ENCODE measurements at regions of chr12 and their contacts with region 1.

Region 1: GRCh38 chr12:7018350-7019042 is at the start of gene LPCAT3:
- DNase-seq: peak; percentile 98
- ATAC-seq: peak; percentile 98
- H3K4me3 Mint-ChIP-seq: peak within 1 kb of the TSS; percentile 83
- H3K27ac Mint-ChIP-seq: peak within 1 kb of the TSS; percentile 80
- H3K4me1 Mint-ChIP-seq: peaks cover 29% of the 10 kb centered on the region
- H3K27me3 Mint-ChIP-seq: no peaks in the 10 kb centered on the region
- total RNA-seq, gene LPCAT3: 20.8 to 28.0 TPM

Region 2: GRCh38 chr12:6873094-6874014 is 145.1 kb before region 1 on chr12 and contains the start of gene SPSB2:
- CTCF ChIA-PET with region 1: interaction called, 4 read pairs
- POLR2A ChIA-PET with region 1: no interaction called
- intact Hi-C with region 1: loop called in 1 of 2 experiments (anchors 1 kb)
- DNase-seq: peak; percentile 100
- ATAC-seq: peak; percentile 74
- H3K4me3 Mint-ChIP-seq: peak within 1 kb of the TSS; percentile 93
- H3K27ac Mint-ChIP-seq: peak within 1 kb of the TSS; percentile 86
- H3K4me1 Mint-ChIP-seq: peaks cover 50% of the 10 kb centered on the region
- H3K27me3 Mint-ChIP-seq: no peaks in the 10 kb centered on the region
- total RNA-seq, gene SPSB2: 1.7 to 2.2 TPM

Region 3: GRCh38 chr12:6914246-6914946 is 104.1 kb before region 1 on chr12 and contains the start of gene ENO2:
- CTCF ChIA-PET with region 1: no interaction called
- POLR2A ChIA-PET with region 1: no interaction called
- intact Hi-C with region 1: loop called in 1 of 2 experiments (anchors 2 kb)
- DNase-seq: peak; percentile 92
- ATAC-seq: peak; percentile 92
- H3K4me3 Mint-ChIP-seq: peak within 1 kb of the TSS; percentile 98
- H3K27ac Mint-ChIP-seq: peak within 1 kb of the TSS; percentile 80
- H3K4me1 Mint-ChIP-seq: peaks cover 35% of the 10 kb centered on the region
- H3K27me3 Mint-ChIP-seq: no peaks in the 10 kb centered on the region
- total RNA-seq, gene ENO2: 301 to 317 TPM

Region 4: GRCh38 chr12:6944381-6945186 is 73.9 kb before region 1 on chr12:
- CTCF ChIA-PET with region 1: interaction called, 11 read pairs
- POLR2A ChIA-PET with region 1: interaction called, 17 read pairs
- intact Hi-C with region 1: loop called (anchors 1 kb)
- DNase-seq: peak; percentile 94
- ATAC-seq: peak; percentile 54
- H3K4me3 Mint-ChIP-seq: peak overlapping the region; percentile 81
- H3K27ac Mint-ChIP-seq: peak overlapping the region; percentile 97
- H3K4me1 Mint-ChIP-seq: peaks cover 59% of the 10 kb centered on the region
- H3K27me3 Mint-ChIP-seq: no peaks in the 10 kb centered on the region

Region 5: GRCh38 chr12:7108796-7109571 is 90.5 kb after region 1 on chr12 and contains the start of gene C1RL:
- CTCF ChIA-PET with region 1: interaction called, 13 read pairs
- POLR2A ChIA-PET with region 1: no interaction called
- intact Hi-C with region 1: loop called (anchors 1 kb)
- DNase-seq: peak; percentile 90
- ATAC-seq: peak; percentile 33
- H3K4me3 Mint-ChIP-seq: peak within 1 kb of the TSS; percentile 92
- H3K27ac Mint-ChIP-seq: peak within 1 kb of the TSS; percentile 94
- H3K4me1 Mint-ChIP-seq: peaks cover 43% of the 10 kb centered on the region
- H3K27me3 Mint-ChIP-seq: no peaks in the 10 kb centered on the region
- total RNA-seq, gene C1RL: 17.3 to 18.9 TPM